Upper lobe of right lung (tissue), 1 donor: ENCODE measurements at regions of chr15 and their contacts with region 1.

Region 1: DNA sequence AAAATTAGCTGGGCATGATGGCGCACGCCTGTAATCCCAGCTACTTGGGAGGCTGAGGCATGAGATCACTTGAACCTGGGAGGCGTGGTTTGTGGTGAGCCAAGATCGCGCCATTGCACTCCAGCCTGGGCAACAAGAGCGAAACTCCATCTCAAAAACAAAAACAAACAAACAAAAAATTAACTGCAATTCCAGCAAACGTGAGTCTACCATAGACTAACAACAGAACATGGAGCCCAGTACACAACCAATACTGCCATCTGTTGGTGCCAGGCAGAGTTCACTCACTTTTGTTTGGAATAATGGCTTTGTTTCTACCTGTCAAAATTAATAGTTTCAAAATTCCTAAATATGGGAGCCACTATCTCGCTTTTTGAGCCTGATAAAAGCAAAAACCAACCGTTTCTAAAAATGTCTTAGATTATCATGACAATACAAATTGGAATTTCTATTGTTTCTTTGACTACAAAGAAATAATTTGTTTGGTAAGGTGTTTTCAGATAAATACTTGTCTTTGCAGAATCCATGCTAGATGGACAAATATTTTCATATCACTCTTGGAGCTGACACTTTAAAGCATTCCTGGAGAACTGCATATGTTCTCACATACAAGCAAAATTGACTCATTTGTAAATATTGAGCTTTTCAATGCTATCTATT is 45.0 kb downstream of the GPR176 start:
- DNase-seq: no peak
- ATAC-seq: peak; percentile 81
- H3K4me3 ChIP-seq: no peak overlapping the region
- H3K27ac ChIP-seq: no peak overlapping the region
- H3K4me1 ChIP-seq: no peaks in the 10 kb centered on the region
- H3K27me3 ChIP-seq: no peaks in the 10 kb centered on the region
- CTCF ChIP-seq: peak; percentile 70

Region 2: GRCh38 chr15:39828374-39828931 is 46.6 kb before region 1 on chr15:
- intact Hi-C with region 1: loop called (anchors 10 kb)
- DNase-seq: no peak
- ATAC-seq: no peak
- H3K4me3 ChIP-seq: no peak overlapping the region
- H3K27ac ChIP-seq: no peak overlapping the region
- H3K4me1 ChIP-seq: no peaks in the 10 kb centered on the region
- H3K27me3 ChIP-seq: no peaks in the 10 kb centered on the region
- CTCF ChIP-seq: no peak

Region 3: GRCh38 chr15:40029979-40030893 is 155.2 kb after region 1 on chr15:
- intact Hi-C with region 1: no loop called
- DNase-seq: no peak
- ATAC-seq: peak; percentile 61
- H3K4me3 ChIP-seq: no peak overlapping the region
- H3K27ac ChIP-seq: peak overlapping the region; percentile 28
- H3K4me1 ChIP-seq: no peaks in the 10 kb centered on the region
- H3K27me3 ChIP-seq: no peaks in the 10 kb centered on the region
- CTCF ChIP-seq: peak; percentile 48